ENCODE measurements at regions of chr18 and their contacts with region 1.

Region 1: GRCh38 chr18:55589625-55590291 is 1.8 kb upstream of the TCF4 start:
- DNase-seq: peak; percentile 85 to 97 (median 93)

Region 2: DNA sequence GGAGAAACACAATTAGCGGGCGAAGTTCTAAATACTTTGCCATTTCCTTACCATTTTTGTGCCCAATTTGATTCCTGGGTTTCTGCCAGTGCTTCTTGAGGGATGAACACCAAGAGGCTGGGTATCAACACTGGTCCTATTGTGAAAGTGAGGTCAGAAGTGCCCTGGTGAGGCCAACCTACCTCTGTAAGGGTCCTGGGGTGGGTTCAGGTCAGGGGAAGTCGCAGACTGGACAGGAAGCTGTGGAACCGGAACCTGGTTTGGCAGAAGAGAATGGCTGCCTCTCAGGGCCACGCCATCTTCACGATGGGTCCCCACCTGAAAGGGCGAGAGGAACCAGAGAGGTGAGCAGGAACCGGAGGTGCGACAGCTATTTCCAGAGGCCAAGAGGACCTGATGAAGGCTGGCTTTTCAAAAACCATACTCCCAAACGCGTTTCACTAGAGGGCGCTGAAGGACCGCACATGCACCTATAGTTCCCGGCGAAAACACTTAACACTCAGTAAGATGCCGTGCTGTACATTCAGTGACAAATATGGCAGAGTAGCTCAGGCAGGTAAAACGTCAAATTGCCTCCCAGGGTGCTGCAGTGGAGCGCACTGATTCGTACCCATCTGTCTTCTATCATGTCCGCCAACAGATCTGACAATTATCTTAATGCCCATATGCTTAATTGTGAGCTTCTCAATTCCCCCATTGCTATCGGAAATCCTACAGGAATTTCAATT is 355.2 kb before region 1 on chr18:
- intact Hi-C with region 1: loop called (anchors 10 kb)
- DNase-seq: peak; percentile 61 to 96 (median 86)

Region 3: GRCh38 chr18:55337908-55338521 is 251.7 kb before region 1 on chr18:
- intact Hi-C with region 1: loop called (anchors 5 kb)
- DNase-seq: peak in 38 of 42 donors; percentile 18 to 78 (median 50)

Region 4: GRCh38 chr18:55405893-55406406 is 183.8 kb before region 1 on chr18:
- intact Hi-C with region 1: loop called (anchors 5 kb)
- DNase-seq: peak; percentile 52 to 96 (median 84)

Region 5: DNA sequence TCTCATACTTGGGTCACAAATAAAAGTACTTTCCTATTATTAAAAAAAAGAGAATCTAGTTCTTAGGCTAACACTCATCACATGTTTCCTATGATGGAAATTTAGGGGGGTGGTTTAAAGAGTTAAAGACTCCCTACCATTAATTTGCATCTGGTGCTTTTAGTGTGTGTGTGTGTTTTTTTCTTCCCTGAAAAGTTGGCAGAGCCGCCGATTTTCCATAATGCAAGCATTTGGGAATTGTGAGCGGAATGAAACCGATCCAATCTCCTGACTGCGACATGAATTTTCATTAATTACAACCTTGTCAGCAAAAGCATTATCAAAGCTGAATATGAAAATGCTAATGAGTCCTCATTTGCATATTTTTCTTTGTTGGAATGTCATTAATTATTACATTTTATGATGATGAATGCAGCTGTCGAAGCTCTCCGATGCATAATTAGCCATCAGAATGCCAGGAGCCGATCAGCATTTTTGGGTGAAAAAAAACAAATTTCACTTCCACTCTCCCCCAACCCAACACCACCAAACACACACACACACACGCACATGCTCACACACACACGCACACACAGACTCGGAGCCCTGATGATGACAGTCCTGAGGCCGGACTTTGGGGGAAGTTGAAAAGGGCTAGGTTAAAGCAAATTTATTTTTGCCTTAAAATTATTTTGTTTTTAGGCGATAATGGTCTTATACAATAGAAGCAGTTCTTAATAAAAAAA is 167.1 kb before region 1 on chr18:
- intact Hi-C with region 1: loop called (anchors 5 kb)
- DNase-seq: peak in 19 of 42 donors; percentile 23 to 75 (median 51)

Region 6: DNA sequence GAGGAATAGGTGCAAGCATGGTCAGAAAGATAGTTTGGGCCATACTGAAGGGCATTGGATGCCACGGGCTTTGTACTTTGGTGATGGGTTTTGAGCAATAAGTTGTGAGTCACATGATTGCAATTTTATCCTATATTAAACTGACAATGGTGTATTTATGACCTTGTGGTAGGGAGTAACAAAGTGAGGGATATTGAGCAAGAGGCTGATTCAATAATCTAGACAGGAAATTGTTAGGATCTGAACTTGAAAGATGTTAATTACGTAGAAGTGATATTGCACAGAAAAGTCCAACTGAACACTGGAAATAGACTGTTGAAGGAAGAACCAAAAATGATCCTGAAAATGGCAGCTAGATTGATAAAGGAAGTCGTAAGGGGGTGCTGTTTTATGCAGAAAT is 44.8 kb after region 1 on chr18:
- intact Hi-C with region 1: no loop called
- DNase-seq: no peak

Region 7: DNA sequence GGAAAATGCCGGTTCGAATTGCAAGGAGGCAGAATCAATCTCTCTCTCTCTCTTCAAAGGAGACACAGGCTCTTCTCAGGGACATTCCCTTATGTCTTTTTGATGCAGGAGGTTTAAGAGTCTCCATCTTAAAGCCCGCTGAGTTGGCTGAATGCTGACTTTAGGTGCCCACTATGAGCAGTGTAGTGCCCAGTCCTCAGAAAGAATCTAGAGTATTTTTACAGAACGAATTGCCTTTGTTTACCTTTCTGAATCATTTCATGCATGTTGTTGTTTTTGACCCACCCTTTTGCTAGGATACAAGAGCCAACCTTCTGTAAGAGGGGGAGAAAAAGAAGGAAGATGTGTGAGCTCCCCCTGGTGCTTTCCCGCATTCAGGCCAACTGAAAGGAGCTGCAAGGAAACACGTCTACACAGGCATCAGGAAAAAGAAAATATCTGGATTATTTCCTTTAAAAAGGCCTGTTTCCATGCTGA is 191.8 kb after region 1 on chr18:
- intact Hi-C with region 1: loop called (anchors 5 kb)
- DNase-seq: peak in 41 of 42 donors; percentile 31 to 90 (median 70)

Measured in head of caudate nucleus (tissue), 42 donors.